AG04449 (cell line): ENCODE measurements at regions of chr17 and their contacts with region 1.

Region 1: GRCh38 chr17:80082403-80083135 is 18.8 kb upstream of the GAA start:
- DNase-seq: no peak
- H3K4me3 ChIP-seq: peak overlapping the region; percentile 8; the same call in 1 of the 2 replicates
- CTCF ChIP-seq: peak; percentile 73

Region 2: DNA sequence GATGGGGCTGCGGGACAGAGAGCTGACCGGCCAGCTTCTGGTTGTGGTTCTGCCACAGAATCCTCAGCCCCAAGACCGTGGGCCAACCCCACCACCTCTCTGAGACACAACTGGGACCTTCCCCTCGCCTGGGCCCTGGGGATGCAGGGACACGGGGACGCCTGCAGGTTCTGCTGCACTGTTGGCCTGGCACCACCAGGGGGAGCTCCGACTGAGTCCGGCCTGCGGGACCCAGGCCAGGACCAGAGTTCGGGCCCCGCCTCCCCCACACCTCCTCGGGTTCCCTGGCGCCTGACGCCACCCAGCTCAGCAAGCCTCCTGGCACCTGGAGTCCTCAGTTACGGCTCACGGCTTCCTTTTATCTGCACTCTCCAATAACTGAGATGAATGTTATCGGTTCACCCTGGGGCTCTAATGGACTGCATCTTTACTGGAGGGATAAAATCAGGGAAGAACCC is 74.2 kb before region 1 on chr17:
- CTCF ChIA-PET with region 1: interaction called, 27 read pairs
- POLR2A ChIA-PET with region 1: no interaction called
- DNase-seq: no peak
- H3K4me3 ChIP-seq: no peak overlapping the region
- CTCF ChIP-seq: peak; percentile 99

Region 3: DNA sequence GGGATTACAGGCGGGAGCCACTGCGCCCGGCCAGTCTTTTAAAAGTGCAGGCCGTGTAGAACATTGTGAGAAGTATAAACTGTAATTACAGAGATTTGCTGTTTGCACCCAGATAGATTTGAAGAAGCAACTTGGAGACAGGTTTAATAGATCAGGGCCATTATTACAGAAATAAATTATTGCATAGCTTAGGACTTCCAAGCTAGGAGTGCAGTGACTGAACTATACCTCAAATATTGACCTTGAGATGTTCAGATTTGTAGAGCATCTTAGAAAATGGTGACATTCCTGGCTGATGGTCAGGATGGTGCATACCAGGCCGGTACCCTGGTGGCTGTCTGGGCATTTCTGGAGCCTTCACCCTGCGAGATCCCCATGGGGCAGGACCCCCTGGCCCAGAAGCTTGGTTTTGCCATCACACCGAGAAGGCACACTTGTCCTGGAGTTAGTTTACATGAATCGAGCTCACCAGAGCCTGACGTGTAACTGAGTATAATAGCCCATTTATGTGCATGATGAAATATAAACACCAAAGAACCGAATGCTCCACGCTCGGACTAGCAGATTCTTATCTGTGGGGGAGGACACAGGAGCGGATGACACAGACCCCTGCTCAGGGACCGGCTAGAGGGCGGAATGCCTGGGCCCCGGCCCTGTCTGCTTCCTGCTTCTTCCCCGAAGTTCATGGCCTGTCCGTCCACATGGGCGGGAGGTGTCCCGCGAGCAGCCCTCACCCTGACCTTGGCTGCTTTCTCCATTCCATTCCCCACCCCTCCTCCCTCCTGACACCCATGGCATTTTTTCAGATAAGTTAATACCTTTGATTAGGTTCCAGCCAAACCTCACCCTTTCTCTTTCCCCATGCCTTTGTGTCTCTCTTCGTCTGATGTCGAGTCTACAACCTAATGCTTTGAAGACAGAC is 14.0 kb before region 1 on chr17:
- CTCF ChIA-PET with region 1: interaction called, 17 read pairs
- POLR2A ChIA-PET with region 1: no interaction called
- DNase-seq: no peak
- H3K4me3 ChIP-seq: no peak overlapping the region
- CTCF ChIP-seq: no peak

Region 4: DNA sequence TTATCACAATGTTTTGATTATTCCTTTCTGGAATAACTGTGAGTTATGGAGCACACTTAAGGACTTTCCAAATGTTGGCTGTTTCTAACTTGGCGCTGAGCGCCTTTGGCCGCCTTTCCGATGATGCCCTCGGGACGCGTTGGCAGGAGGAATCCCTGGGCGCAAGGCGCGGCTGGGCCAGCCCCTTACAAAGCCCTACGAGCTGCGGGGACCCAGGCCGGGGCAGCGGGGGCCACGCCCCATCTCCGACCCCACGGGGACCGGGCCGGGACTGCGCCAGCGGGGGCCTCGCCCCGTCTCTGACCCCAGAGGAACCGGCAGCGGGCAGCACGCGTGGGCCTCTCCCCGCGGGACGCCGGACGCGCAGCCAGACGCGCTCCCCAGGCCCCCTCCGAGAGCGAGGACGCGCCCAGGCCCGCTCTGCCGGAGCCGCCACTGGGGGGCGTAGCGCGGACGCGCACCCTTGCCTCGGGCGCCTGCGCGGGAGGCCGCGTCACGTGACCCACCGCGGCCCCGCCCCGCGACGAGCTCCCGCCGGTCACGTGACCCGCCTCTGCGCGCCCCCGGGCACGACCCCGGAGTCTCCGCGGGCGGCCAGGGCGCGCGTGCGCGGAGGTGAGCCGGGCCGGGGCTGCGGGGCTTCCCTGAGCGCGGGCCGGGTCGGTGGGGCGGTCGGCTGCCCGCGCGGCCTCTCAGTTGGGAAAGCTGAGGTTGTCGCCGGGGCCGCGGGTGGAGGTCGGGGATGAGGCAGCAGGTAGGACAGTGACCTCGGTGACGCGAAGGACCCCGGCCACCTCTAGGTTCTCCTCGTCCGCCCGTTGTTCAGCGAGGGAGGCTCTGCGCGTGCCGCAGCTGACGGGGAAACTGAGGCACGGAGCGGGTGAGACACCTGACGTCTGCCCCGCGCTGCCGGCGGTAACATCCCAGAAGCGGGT is 18.7 kb after region 1 on chr17 and contains the start of gene GAA:
- CTCF ChIA-PET with region 1: interaction called, 66 read pairs
- POLR2A ChIA-PET with region 1: interaction called, 3 read pairs
- DNase-seq: no peak
- H3K4me3 ChIP-seq: peak within 1 kb of the TSS; percentile 98
- CTCF ChIP-seq: peak; percentile 80

Region 5: GRCh38 chr17:80147035-80147836 is 64.7 kb after region 1 on chr17 and contains the start of gene EIF4A3:
- CTCF ChIA-PET with region 1: interaction called, 13 read pairs
- POLR2A ChIA-PET with region 1: no interaction called
- DNase-seq: peak; percentile 93
- H3K4me3 ChIP-seq: peak within 1 kb of the TSS; percentile 97
- CTCF ChIP-seq: no peak

Region 6: DNA sequence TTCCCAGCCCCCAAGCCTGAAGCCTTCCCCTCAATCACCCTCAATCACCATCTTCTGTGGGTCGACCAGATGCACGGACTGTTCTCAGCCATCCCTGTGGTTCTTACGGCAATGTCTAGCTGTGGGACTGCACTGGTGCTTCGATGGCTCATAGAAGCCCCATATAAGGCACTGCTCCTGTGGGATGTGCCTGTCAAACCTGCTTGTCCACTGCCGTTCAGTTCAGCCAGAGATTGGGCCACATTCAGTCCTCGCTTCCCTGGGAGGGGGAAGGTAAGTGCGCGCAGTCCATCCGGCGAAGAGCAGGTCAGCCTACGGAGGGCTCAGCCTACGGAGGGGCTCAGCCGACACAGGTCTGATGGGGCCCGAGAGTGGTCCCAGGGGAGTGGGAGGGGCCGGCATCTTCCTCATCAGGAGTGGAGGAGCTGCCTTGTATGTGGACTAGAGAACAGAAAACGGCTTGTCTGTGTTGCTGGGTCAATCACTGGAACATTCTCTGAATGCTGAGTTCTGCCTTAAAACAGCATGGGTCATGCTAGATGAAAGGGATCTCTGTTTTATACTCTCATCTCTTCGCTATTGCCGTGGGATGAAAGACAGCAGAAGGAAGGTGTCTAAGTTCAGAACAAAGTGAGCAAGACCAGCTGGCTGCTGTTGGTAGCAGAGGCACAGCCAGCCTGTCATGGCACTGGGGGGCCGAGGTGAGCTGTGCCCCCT is 87.4 kb after region 1 on chr17 and contains the start of gene CARD14:
- CTCF ChIA-PET with region 1: no interaction called
- POLR2A ChIA-PET with region 1: no interaction called
- DNase-seq: no peak
- H3K4me3 ChIP-seq: no peak within 1 kb of the TSS
- CTCF ChIP-seq: no peak